Psoas muscle (tissue), 8 donors: ENCODE measurements at regions of chr7 and their contacts with region 1.

Region 1: DNA sequence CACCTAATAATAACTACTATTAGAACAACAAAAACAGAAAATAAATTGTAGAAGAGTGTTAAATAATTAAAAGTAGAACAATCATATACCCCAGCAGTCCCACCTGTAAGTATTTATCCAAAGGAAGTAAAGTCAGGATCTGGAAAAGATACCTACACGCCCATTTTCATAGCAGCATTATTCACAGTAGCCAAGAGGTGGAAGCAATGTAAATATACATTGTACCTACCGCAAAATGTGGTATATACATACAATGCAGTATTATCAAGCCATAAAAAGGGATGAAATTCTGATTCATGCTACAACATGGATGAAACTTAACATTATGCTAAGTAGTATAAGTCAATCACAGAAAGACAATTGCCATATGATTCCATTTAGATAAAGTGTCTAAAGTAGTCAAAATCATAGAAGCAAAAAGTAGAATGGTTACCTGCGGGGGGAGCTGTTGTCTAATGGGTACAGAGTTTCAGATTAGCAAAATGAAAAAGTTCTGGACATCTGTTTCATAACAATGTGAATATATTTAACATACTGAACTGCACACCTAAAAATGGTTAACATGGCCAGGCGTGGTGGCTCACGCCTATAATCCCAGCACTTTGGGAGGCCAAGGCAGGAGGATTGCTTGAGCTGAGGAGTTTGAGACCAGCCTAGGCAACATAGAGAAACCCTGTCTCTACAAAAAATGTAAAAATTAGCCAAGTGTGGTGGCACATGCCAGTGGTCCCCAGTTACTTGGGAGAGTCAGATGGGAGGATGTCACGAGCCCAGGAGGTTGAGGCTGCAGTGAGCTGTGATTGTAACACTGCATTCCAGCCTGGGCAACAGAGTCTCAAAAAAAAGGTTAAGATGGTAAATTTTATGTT is 6.0 kb upstream of the TMED4 start:
- DNase-seq: no peak
- ATAC-seq: peak; percentile 60 to 86 (median 72)
- H3K4me3 ChIP-seq: no peak overlapping the region
- H3K27ac ChIP-seq: no peak overlapping the region
- H3K4me1 ChIP-seq: peaks cover 6% of the 10 kb centered on the region
- H3K27me3 ChIP-seq: no peaks in the 10 kb centered on the region
- CTCF ChIP-seq: peak; percentile 64

Region 2: DNA sequence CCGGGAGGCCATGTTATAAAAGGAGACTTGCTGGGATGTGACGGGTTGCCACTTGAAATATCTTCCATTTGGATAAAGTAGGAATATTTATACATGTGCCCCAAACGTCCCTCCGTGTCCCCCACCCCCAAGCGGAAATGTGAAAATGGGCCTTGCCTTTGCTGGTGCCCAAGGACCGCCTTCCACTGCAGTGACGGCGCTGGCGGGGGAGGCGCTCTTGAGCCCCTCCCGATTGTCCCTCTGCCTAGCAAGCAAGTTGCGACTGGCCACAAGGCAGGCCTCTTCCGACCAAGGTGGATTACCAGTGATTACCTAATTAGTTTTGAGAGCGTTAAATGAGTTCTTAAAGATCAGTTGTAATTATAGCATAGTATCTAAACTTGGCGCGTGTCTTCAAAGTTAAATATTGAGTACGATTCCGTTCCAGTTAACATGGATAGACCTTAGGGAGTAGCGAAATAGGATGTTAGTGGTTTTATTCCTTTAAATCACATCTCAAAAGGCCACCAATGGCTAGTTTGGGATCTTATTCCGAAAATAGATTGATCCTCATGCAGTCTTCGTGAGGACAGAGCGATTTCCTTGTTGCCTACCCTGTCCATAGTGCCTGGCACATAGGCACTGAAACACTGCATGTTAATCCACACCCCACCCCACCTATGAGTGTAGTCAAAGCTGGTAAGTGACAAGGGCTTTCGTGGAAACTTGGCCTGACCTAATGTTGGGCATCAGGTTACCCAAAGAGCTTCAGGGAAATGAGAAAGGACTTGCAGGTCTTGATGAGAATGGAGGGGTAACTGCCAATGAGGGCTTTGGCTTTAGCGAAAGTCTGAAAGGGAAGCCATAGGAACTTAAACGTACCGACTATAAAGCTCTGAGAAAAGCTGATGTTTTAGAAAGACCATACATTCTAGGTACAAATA is 209.5 kb after region 1 on chr7:
- intact Hi-C with region 1: loop called in 1 of 2 experiments (anchors 5 kb)
- DNase-seq: peak; percentile 89 to 92
- ATAC-seq: peak; percentile 79 to 82 (median 82)
- H3K4me3 ChIP-seq: peak overlapping the region; percentile 70
- H3K27ac ChIP-seq: peak overlapping the region; percentile 89
- H3K4me1 ChIP-seq: peaks cover 11% of the 10 kb centered on the region
- H3K27me3 ChIP-seq: no peaks in the 10 kb centered on the region
- CTCF ChIP-seq: peak; percentile 20